AG04449 (cell line): ENCODE measurements at regions of chr2 and their contacts with region 1.

Region 1: DNA sequence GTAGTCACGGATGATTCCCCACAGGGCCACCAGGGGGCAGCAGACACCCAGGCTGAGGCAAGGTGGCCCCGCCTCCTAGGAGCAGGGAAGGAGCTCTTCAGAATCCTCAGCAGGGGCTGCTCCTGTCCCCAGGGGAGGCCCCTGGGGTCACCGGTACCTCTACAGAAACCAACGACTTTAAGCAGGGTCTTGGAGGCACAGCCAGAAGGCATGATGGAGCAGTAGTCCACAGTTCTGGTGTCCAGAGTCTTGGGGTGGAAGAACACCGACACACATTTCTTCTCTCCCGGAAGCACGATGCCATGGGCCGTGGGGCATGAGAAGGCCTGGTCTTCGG is 11.5 kb downstream of the CFAP65 start:
- DNase-seq: peak; percentile 2
- H3K4me3 ChIP-seq: no peak overlapping the region
- CTCF ChIP-seq: peak; percentile 94

Region 2: GRCh38 chr2:218990052-218990451 is 39.7 kb before region 1 on chr2:
- CTCF ChIA-PET with region 1: interaction called, 13 read pairs
- POLR2A ChIA-PET with region 1: no interaction called
- DNase-seq: no peak
- H3K4me3 ChIP-seq: no peak overlapping the region
- CTCF ChIP-seq: no peak

Region 3: DNA sequence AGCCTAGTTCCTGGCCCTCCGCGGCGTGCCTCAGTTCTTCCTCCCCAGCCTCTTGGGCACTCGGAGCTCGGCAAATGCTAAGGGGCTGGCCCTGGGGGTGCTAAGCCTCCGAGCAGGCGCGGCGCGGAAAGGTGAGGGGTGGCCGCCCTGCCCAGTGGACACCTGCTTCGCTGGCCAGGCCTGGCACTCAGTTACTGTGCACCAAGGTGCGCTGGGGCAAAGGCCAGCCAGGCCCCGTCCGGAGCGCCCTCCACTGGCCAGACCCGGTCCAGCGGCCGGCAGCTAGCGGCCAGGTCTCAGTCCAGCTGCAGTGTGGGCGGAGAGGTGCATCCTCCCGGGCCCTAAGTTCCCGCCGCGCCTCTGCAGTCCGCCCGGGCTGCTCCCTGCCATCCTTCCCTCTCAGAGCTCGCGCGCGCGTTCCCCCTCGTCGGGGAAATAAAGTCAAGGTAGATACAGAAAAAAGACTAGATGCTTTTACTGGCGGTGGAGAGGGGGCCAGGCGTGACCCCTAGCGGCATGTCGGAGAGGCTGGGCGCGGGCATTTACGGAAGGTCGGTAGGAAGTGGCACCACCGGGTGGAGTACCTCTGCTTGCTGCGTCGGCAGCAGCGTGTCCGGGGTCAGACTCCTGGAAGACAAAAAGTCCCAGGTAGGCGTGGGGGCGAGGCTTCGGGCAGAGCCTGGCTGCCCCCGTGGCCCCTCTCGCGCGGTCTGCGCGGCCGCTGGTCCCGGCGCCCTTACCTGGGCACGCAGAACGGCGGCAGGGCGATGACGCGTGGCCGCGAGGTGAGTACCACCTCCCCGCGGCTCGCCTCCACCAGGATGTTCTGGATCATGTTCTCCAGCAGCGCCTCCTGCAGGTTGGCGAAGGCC is 27.2 kb before region 1 on chr2:
- CTCF ChIA-PET with region 1: interaction called, 118 read pairs
- POLR2A ChIA-PET with region 1: no interaction called
- DNase-seq: no peak
- H3K4me3 ChIP-seq: no peak overlapping the region
- CTCF ChIP-seq: peak; percentile 53

Region 4: DNA sequence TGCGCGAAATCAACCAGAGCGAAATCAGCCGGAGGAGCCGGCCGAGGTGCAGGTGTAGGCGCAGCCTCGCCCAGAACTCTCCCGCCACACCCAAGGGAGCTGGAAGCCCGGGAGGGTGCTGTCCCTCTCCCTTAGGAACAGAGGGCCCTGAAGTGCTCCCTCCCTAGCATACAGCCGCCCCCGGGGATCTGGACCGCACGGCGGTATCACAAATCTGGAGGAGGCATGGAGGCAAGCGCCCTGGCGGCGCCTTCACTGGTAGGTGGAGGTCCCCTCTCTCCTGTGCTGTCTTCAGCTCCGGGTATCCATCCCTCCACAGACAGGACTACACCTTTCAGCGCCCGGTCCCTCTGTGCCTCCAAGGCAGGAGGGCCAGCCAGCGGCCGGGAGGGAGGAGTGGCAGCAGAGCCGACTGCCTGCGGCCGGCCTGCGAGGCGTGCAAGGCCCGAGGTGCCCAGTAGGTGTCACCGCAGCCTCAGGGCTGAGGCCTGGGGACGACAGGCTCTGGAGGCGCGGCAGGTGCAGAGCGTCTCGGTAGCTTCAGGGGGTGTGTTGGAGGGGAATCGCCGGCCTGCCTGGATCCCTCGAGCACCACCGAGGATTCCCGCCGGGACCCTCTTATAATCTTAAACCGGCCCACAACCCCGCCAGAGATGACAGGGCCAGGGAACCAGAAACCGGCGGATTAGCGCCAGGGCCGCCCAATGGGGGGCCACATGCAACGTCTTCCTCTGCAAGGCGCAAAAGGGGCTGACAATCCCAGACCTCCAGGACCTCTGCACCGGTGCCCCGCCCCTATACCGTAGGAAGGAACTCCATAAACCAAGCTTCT is 28.1 kb after region 1 on chr2:
- CTCF ChIA-PET with region 1: interaction called, 20 read pairs
- POLR2A ChIA-PET with region 1: no interaction called
- DNase-seq: no peak
- H3K4me3 ChIP-seq: no peak overlapping the region
- CTCF ChIP-seq: peak; percentile 96

Region 5: GRCh38 chr2:219087361-219087760 is 57.6 kb after region 1 on chr2:
- CTCF ChIA-PET with region 1: interaction called, 17 read pairs
- POLR2A ChIA-PET with region 1: no interaction called
- DNase-seq: no peak
- H3K4me3 ChIP-seq: no peak overlapping the region
- CTCF ChIP-seq: no peak

Region 6: GRCh38 chr2:219142329-219142728 is 112.5 kb after region 1 on chr2:
- CTCF ChIA-PET with region 1: interaction called, 22 read pairs
- POLR2A ChIA-PET with region 1: no interaction called
- DNase-seq: peak; percentile 46
- H3K4me3 ChIP-seq: no peak overlapping the region
- CTCF ChIP-seq: peak; percentile 51